ENCODE measurements at regions of chr1 and their contacts with region 1.

Region 1: DNA sequence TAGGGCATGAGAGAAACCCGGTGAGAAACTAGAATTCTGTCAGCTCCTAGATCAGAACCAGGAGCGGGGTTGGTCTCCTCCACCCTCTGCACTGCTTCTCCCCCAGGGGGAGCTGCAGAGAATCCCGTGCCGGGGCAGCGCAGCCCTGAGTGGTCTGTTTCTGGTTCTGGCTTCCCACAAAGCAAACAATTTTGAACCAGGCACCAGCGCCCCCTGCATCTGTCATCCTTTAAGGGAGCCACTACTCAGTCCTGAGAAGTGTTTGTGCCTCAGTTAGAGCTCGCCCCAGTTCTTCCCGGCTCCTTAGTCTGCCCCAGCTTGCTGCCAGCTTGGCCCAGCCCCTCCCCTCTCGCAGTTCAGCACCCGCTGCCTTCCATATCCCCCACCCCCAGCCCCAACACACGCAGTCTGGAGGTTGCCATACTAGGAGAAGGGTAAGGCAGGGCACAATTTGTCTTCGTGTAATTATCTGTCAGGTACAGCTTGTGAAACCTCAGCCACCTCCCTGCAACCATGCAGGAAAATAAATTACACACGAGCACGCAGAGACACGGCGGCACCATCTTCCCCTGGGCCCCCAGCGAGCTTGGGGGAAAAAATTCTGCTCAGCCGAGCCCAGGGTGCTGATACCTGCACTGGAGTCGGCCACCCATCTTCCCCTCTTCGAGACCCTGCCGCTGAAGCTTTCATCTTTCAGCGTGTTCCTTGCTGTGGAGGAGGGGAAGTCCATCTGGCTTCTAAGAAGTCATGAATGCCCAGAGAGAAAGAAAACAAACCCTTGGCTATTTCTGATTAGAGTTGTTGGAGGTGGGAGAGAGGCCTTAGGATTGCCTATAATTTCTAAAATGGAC is 62.6 kb upstream of the CD1D start:
- DNase-seq: peak; percentile 52
- H3K4me3 ChIP-seq: no peak overlapping the region
- H3K27ac ChIP-seq: no peak overlapping the region
- H3K4me1 ChIP-seq: peaks cover 2% of the 10 kb centered on the region
- H3K27me3 ChIP-seq: peaks cover 31 to 32% of the 10 kb centered on the region in 2 experiments
- CTCF ChIP-seq: peak; percentile 49 to 57
- POLR2A ChIP-seq: no peak

Region 2: GRCh38 chr1:157580179-157580827 is 537.8 kb before region 1 on chr1:
- CTCF ChIA-PET with region 1: interaction called, 311 read pairs
- POLR2A ChIA-PET with region 1: no interaction called
- dilution Hi-C with region 1: no loop called
- intact Hi-C with region 1: no loop called
- DNase-seq: peak; percentile 70
- H3K4me3 ChIP-seq: no peak overlapping the region
- H3K27ac ChIP-seq: no peak overlapping the region
- H3K4me1 ChIP-seq: no peaks in the 10 kb centered on the region
- H3K27me3 ChIP-seq: peaks cover 0 to 2% of the 10 kb centered on the region in 2 experiments
- CTCF ChIP-seq: peak; percentile 59 to 63
- POLR2A ChIP-seq: no peak

Region 3: DNA sequence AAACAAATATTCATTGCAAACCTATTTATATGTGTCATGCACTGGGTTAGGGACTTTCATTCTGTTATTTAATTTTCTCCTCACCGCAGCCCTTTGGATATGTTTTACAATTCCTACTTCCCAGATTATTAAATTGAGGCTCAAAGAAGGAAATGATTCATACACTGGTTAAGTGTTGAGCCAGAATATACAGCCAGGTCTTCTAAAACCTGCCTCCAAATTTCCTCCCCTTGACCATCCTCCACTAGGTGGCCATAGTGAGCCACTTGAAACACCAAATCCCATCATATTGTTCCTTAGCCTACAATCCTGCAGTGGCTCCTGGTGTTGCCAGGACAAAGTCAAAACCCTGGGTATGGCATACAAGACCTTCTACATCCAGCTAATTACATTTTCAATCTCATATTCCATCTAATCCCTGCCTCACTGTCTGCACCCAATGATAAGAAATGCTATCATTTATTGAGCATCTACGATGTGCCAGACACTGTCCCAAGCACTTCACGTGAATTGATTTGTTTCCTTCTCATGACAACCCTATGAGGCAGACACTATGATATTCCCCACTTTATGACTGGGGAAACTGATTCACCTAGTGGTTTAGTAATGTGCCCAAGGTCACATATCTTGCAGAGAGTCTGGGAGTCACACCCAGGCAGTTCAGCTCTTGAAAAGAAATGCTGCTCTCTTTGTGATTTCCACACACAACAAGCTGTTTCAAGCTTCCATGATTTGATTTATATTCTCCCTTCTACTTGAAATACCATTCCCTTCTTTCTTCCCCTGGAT is 148.2 kb before region 1 on chr1:
- CTCF ChIA-PET with region 1: interaction called, 366 read pairs
- POLR2A ChIA-PET with region 1: no interaction called
- dilution Hi-C with region 1: no loop called
- intact Hi-C with region 1: loop called (anchors 1 kb)
- DNase-seq: peak; percentile 90
- H3K4me3 ChIP-seq: no peak overlapping the region
- H3K27ac ChIP-seq: peak overlapping the region; percentile 10
- H3K4me1 ChIP-seq: peaks cover 17% of the 10 kb centered on the region
- H3K27me3 ChIP-seq: peaks cover 2 to 4% of the 10 kb centered on the region in 2 experiments
- CTCF ChIP-seq: peak; percentile 75 to 90
- POLR2A ChIP-seq: no peak

Region 4: GRCh38 chr1:158095737-158096335 is 22.2 kb before region 1 on chr1:
- CTCF ChIA-PET with region 1: interaction called, 56 read pairs
- POLR2A ChIA-PET with region 1: no interaction called
- dilution Hi-C with region 1: no loop called
- intact Hi-C with region 1: loop called (anchors 1 kb)
- DNase-seq: peak; percentile 41
- H3K4me3 ChIP-seq: no peak overlapping the region
- H3K27ac ChIP-seq: no peak overlapping the region
- H3K4me1 ChIP-seq: no peaks in the 10 kb centered on the region
- H3K27me3 ChIP-seq: no peaks in the 10 kb centered on the region
- CTCF ChIP-seq: peak; percentile 81 to 82
- POLR2A ChIP-seq: no peak

Region 5: DNA sequence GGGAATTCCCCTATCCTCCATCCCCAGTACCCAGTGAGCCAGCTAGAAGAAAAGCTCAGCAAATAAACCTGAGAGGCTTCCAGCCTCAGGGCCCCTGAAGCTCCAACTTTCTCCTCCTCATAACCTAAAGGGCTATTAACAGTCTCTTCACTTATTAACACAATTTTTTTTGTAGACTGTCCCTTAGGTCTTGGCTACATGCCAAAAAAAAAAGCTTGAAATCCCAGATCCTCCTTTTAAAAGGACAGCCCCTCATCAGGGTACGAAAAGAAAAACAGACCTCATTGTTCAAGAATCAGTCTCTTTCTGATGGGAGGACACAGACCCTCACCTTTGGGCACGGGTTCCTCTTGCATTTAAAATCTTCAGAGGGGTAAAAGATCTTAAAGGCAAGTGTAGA is 10.2 kb before region 1 on chr1:
- CTCF ChIA-PET with region 1: interaction called, 44 read pairs
- POLR2A ChIA-PET with region 1: no interaction called
- dilution Hi-C with region 1: no loop called
- intact Hi-C with region 1: no loop called
- DNase-seq: no peak
- H3K4me3 ChIP-seq: no peak overlapping the region
- H3K27ac ChIP-seq: no peak overlapping the region
- H3K4me1 ChIP-seq: peaks cover under 1% of the 10 kb centered on the region
- H3K27me3 ChIP-seq: peaks cover 35 to 39% of the 10 kb centered on the region in 2 experiments
- CTCF ChIP-seq: no peak
- POLR2A ChIP-seq: no peak

Measured in endothelial cell of umbilical vein (primary cell).